CD4-positive, alpha-beta T cell (primary cell): ENCODE measurements at regions of chr2 and their contacts with region 1.

Region 1: DNA sequence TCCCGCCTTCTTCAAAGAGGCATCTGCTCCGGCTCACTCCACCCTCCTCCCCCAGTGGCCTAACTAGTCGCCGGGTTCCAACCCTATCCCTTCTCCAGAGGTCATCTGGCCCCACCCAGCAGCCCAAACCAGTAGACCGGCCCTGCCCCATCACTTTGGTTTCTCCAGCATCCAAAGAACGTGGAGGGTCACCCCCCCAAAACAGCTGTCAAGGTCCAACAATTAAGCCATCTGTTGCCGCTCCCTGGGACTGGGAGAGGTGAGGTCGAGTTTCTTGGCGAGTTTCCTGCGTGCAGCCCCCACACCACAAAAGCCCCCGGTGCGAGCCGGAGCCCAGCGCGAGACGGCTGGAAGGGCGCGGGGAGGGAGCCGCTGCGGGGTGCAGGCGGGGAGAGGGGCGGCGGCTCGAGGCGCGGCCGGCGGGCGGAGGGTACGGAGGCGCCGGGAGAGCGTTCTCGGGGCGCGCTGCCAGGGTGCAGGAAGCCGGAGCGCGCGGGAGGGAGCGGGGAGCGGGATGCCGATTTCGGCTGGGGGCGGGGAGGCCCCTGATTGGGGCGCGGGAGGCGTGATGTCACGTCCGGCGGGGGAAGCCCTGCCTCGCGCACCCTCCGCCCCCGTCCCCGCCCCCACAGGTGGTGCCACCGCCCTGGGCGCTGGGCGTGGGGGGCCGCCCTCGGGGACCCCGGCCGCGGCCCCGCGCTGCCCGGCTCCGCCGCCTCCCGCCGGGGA is 571 bp upstream of the GPC1 start:
- DNase-seq: peak; percentile 76 to 95 (median 89)
- ATAC-seq: peak; percentile 83
- H3K4me3 ChIP-seq: peak overlapping the region; percentile 51
- H3K4me3 Mint-ChIP-seq: peak overlapping the region; percentile 93
- H3K27ac ChIP-seq: no peak overlapping the region
- H3K27ac Mint-ChIP-seq: peak overlapping the region; percentile 61
- H3K4me1 ChIP-seq: peaks cover 25% of the 10 kb centered on the region
- H3K4me1 Mint-ChIP-seq: peaks cover 4% of the 10 kb centered on the region
- H3K27me3 ChIP-seq: peaks cover 22 to 27% of the 10 kb centered on the region in 2 experiments
- H3K27me3 Mint-ChIP-seq: peaks cover 22% of the 10 kb centered on the region
- CTCF ChIP-seq: no peak

Region 2: DNA sequence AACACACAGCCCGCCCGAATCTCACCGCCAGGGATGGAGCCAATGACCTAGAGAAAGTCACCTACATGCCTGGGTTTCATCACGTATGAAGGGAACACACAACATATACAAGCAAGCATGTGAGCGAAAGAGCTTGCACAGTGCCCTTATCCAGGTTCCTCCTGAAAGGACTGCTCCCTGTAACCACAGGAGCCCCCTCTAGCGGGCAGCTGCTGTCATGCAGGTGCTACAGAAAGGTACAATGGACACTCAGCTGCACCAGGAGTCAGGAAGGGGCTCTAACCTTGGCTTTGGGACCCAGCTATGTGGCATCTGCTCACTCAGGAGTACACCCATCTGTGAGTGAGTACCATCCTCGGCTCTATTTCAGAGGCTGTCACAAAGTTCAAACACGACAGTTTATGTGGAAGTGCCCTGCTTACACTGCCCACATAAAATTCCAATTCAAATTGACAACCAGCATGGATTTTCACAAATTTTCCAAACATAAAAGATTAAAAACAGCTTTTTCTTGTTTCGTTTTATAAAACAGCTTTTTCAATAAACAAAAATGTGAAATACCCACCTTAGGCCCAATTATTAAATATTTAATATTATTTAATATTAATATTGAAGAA is 413.3 kb before region 1 on chr2:
- CTCF ChIA-PET with region 1: no interaction called
- POLR2A ChIA-PET with region 1: no interaction called
- intact Hi-C with region 1: loop called in 1 of 2 experiments (anchors 10 kb)
- DNase-seq: peak; percentile 26 to 79 (median 58)
- ATAC-seq: peak; percentile 40
- H3K4me3 ChIP-seq: no peak overlapping the region
- H3K4me3 Mint-ChIP-seq: peak overlapping the region; percentile 54
- H3K27ac ChIP-seq: no peak overlapping the region
- H3K27ac Mint-ChIP-seq: peak overlapping the region; percentile 30
- H3K4me1 ChIP-seq: peaks cover 21% of the 10 kb centered on the region
- H3K4me1 Mint-ChIP-seq: peaks cover 44% of the 10 kb centered on the region
- H3K27me3 ChIP-seq: no peaks in the 10 kb centered on the region
- H3K27me3 Mint-ChIP-seq: no peaks in the 10 kb centered on the region
- CTCF ChIP-seq: peak; percentile 61

Region 3: GRCh38 chr2:240060977-240061591 is 373.8 kb before region 1 on chr2:
- CTCF ChIA-PET with region 1: no interaction called
- POLR2A ChIA-PET with region 1: no interaction called
- intact Hi-C with region 1: loop called in 1 of 2 experiments (anchors 10 kb)
- DNase-seq: peak in 12 of 14 experiments; percentile 22 to 74 (median 34)
- ATAC-seq: peak; percentile 85
- H3K4me3 ChIP-seq: no peak overlapping the region
- H3K4me3 Mint-ChIP-seq: no peak overlapping the region
- H3K27ac ChIP-seq: no peak overlapping the region
- H3K27ac Mint-ChIP-seq: no peak overlapping the region
- H3K4me1 ChIP-seq: no peaks in the 10 kb centered on the region
- H3K4me1 Mint-ChIP-seq: no peaks in the 10 kb centered on the region
- H3K27me3 ChIP-seq: peaks cover 10 to 16% of the 10 kb centered on the region in 2 experiments
- H3K27me3 Mint-ChIP-seq: peaks cover 33% of the 10 kb centered on the region
- CTCF ChIP-seq: peak; percentile 65

Region 4: DNA sequence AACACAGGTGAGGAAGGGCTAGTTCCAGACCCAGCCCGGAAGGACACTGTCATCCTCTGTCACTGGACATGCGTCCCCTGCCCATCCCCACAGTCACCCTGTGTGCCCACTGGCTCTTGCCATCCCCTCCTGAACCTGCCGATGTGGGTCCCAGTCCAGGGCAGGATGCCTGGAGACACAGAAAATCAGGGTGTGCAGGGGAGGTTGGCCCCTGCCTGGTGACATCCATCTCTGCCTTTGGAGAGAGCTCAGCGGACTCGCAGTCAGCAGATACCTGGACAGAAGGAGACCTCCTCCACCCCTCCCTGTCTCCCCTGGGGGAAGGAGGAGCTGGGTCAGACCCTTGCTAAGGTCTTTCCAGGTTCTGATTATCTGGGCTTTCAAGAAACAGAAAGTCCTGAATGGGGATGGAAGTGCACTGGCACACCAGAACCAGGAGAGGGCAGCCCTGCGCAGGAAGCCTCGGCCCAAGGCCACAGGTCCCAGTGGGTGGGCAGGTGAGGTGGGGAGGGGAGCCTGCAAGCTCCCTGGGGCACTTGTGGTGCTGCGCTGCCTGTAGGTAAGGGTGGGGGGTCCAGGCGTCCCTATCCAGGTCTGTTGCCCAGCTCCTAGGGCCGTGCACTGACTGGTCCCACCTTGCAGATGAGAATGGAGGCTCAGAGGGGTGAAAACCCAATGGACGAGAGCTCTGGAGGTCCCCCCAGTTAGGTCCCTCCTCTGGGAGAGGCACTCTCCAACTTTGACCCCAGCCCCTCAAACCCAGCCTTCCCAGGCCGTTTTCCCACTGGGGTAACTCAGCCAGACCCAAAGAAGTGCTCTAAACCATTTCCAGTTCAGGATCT is 284.7 kb before region 1 on chr2:
- CTCF ChIA-PET with region 1: no interaction called
- POLR2A ChIA-PET with region 1: no interaction called
- intact Hi-C with region 1: loop called in 1 of 2 experiments (anchors 1 kb)
- DNase-seq: peak in 7 of 14 experiments; percentile 10 to 51 (median 20)
- ATAC-seq: peak; percentile 51
- H3K4me3 ChIP-seq: no peak overlapping the region
- H3K4me3 Mint-ChIP-seq: no peak overlapping the region
- H3K27ac ChIP-seq: no peak overlapping the region
- H3K27ac Mint-ChIP-seq: no peak overlapping the region
- H3K4me1 ChIP-seq: no peaks in the 10 kb centered on the region
- H3K4me1 Mint-ChIP-seq: no peaks in the 10 kb centered on the region
- H3K27me3 ChIP-seq: peaks cover 4 to 11% of the 10 kb centered on the region in 2 experiments
- H3K27me3 Mint-ChIP-seq: peaks cover 22% of the 10 kb centered on the region
- CTCF ChIP-seq: peak; percentile 43

Region 5: GRCh38 chr2:240232961-240233893 is 201.7 kb before region 1 on chr2:
- CTCF ChIA-PET with region 1: interaction called, 4 read pairs
- POLR2A ChIA-PET with region 1: no interaction called
- intact Hi-C with region 1: loop called (anchors 1 kb)
- DNase-seq: peak; percentile 52 to 85 (median 66)
- ATAC-seq: peak; percentile 71
- H3K4me3 ChIP-seq: no peak overlapping the region
- H3K4me3 Mint-ChIP-seq: no peak overlapping the region
- H3K27ac ChIP-seq: no peak overlapping the region
- H3K27ac Mint-ChIP-seq: no peak overlapping the region
- H3K4me1 ChIP-seq: peaks cover 18% of the 10 kb centered on the region
- H3K4me1 Mint-ChIP-seq: no peaks in the 10 kb centered on the region
- H3K27me3 ChIP-seq: no peaks in the 10 kb centered on the region
- H3K27me3 Mint-ChIP-seq: peaks cover 16% of the 10 kb centered on the region
- CTCF ChIP-seq: peak; percentile 75

Region 6: DNA sequence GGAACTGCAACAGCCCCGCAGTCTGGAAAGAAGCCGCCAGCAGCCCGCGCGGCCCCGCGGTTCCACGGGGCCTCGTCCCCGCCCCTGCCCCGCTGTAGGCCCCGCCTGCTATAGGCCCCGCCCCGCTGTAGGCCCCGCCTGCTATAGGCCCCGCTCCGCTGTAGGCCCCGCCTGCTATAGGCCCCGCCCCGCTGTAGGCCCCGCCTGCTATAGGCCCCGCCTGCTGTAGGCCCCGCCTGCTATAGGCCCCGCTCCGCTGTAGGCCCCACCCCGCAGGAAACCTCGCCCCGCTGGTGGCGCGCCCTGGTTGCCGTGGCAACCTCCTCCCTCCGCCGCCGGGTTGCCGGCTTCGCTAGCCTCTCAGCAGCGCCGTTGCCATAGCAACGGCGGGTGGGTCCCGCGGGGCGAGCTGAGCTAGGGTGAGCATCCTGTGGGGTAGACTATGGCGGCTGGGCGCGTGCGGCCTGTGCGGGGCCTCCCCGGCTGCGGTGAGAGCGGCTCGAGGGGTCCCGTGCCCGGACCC is 397.4 kb after region 1 on chr2:
- CTCF ChIA-PET with region 1: no interaction called
- POLR2A ChIA-PET with region 1: no interaction called
- intact Hi-C with region 1: loop called in 1 of 2 experiments (anchors 2 kb)
- DNase-seq: peak; percentile 98 to 100 (median 99)
- ATAC-seq: peak; percentile 91
- H3K4me3 ChIP-seq: peak overlapping the region; percentile 43
- H3K4me3 Mint-ChIP-seq: peak overlapping the region; percentile 38
- H3K27ac ChIP-seq: no peak overlapping the region
- H3K27ac Mint-ChIP-seq: no peak overlapping the region
- H3K4me1 ChIP-seq: peaks cover 14% of the 10 kb centered on the region
- H3K4me1 Mint-ChIP-seq: no peaks in the 10 kb centered on the region
- H3K27me3 ChIP-seq: peaks cover 17 to 26% of the 10 kb centered on the region in 2 experiments
- H3K27me3 Mint-ChIP-seq: peaks cover 36% of the 10 kb centered on the region
- CTCF ChIP-seq: no peak